B cell (primary cell): ENCODE measurements at regions of chr14 and their contacts with region 1.

Region 1: DNA sequence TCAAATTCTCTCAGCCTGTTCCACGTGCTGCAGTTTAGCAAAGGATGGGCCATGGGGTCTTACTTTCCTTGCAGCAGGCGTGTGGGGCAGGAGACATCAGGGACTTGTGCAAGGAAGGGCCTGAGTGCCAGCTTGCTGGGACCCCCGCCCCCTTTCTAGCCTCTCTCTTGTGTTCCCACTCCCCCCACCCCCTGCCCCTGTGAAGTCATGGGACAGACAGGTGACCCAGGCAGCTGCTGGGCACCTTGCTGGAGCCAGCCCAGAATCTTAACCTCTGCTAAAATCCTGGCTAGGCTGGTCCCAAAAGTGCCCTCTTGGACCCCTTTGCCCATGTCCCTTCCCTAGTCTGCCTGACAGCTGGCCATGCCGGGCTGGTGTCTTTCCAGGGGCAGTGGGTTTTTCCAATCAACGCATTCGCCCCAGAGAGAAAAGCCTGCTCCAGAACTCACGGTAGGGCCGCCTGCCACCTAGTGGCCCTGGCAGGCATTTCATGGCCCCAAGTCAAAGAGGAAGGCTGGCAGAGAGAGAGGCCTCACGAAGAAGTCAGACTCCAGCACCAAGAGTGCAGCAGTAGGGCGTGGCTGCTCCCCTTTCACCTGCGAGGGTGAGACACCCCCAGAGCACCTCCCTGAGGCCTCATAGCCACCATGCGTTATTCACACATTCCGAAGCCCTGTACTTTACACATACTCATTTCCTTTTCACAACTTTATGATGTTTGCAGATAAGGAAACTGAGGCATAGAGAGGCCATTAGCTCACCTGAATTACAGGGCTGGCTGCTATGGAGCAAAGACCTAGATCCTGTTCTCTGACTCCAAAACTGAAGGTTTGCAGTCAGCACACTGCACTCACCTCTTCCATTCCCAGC is 67.4 kb downstream of the LGMN start:
- DNase-seq: peak; percentile 87
- ATAC-seq: peak; percentile 16
- H3K4me3 ChIP-seq: no peak overlapping the region
- H3K4me3 Mint-ChIP-seq: no peak overlapping the region
- H3K27ac ChIP-seq: peak overlapping the region; percentile 52 to 66
- H3K27ac Mint-ChIP-seq: peak overlapping the region; percentile 86
- H3K4me1 ChIP-seq: peaks cover 31% of the 10 kb centered on the region in 2 donors
- H3K4me1 Mint-ChIP-seq: peaks cover 38% of the 10 kb centered on the region
- H3K27me3 ChIP-seq: no peaks in the 10 kb centered on the region
- H3K27me3 Mint-ChIP-seq: no peaks in the 10 kb centered on the region
- CTCF ChIP-seq: peak; percentile 97

Region 2: GRCh38 chr14:92507174-92507768 is 173.7 kb before region 1 on chr14:
- CTCF ChIA-PET with region 1: no interaction called
- POLR2A ChIA-PET with region 1: no interaction called
- intact Hi-C with region 1: loop called (anchors 2 kb)
- DNase-seq: peak; percentile 84
- ATAC-seq: peak; percentile 77
- H3K4me3 ChIP-seq: peak overlapping the region in 4 of 5 experiments; percentile 5 to 53 (median 14)
- H3K4me3 Mint-ChIP-seq: peak overlapping the region; percentile 46
- H3K27ac ChIP-seq: peak overlapping the region; percentile 59 to 70
- H3K27ac Mint-ChIP-seq: peak overlapping the region; percentile 80
- H3K4me1 ChIP-seq: peaks cover 37 to 55% of the 10 kb centered on the region in 2 donors
- H3K4me1 Mint-ChIP-seq: peaks cover 62% of the 10 kb centered on the region
- H3K27me3 ChIP-seq: no peaks in the 10 kb centered on the region
- H3K27me3 Mint-ChIP-seq: no peaks in the 10 kb centered on the region
- CTCF ChIP-seq: no peak

Region 3: DNA sequence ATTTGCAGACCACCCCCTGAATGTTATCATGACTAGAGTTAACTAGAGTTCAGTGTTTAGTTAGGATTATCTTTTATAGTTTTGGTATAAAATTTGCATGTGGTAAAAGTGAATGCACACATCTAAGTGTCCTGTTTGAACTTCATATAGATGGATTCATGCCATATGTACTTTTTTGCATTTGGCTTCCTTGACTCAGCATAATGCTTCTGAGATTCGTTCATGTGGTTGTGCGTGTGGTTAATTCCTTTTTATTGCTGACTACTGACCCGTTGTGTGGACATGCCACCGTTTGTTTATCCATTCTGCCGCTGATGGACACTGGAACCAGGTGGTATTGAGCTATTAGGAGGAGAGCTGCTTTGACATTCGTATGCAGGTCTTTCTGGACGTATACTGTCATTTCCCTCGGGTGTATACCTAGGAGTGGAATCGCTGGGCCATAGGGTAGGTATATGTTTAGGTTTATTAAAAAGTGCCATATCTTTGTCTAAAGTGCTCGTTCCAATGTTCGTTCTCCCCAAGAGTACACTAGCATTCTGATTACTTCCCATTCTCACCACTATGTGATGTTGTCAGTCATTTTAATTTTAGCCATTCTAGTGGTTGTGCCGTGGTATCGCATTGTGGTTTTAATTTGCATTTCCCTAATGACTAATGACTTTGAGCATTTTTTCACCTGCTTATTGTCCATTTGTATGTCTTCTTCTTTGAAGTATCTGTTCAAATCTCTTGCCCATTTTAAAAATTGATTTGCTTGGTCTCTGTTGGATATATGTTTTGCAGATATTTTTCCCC is 129.8 kb before region 1 on chr14:
- CTCF ChIA-PET with region 1: interaction called, 4 read pairs
- POLR2A ChIA-PET with region 1: no interaction called
- intact Hi-C with region 1: loop called (anchors 1 kb)
- DNase-seq: peak; percentile 78
- ATAC-seq: peak; percentile 74
- H3K4me3 ChIP-seq: no peak overlapping the region
- H3K4me3 Mint-ChIP-seq: peak overlapping the region; percentile 38
- H3K27ac ChIP-seq: no peak overlapping the region
- H3K27ac Mint-ChIP-seq: no peak overlapping the region
- H3K4me1 ChIP-seq: peaks cover 36 to 38% of the 10 kb centered on the region in 2 donors
- H3K4me1 Mint-ChIP-seq: peaks cover 38% of the 10 kb centered on the region
- H3K27me3 ChIP-seq: peaks cover 0 to 17% (median 6%) of the 10 kb centered on the region in 4 experiments
- H3K27me3 Mint-ChIP-seq: peaks cover 29% of the 10 kb centered on the region
- CTCF ChIP-seq: peak; percentile 76

Region 4: GRCh38 chr14:92600318-92601053 is 80.5 kb before region 1 on chr14:
- CTCF ChIA-PET with region 1: interaction called, 29 read pairs
- POLR2A ChIA-PET with region 1: no interaction called
- intact Hi-C with region 1: no loop called
- DNase-seq: no peak
- ATAC-seq: no peak
- H3K4me3 ChIP-seq: no peak overlapping the region
- H3K4me3 Mint-ChIP-seq: no peak overlapping the region
- H3K27ac ChIP-seq: no peak overlapping the region
- H3K27ac Mint-ChIP-seq: peak overlapping the region; percentile 2
- H3K4me1 ChIP-seq: peaks cover 0 to 13% of the 10 kb centered on the region in 2 donors
- H3K4me1 Mint-ChIP-seq: peaks cover 38% of the 10 kb centered on the region
- H3K27me3 ChIP-seq: no peaks in the 10 kb centered on the region
- H3K27me3 Mint-ChIP-seq: no peaks in the 10 kb centered on the region
- CTCF ChIP-seq: no peak

Region 5: GRCh38 chr14:92670160-92670559 is 10.9 kb before region 1 on chr14:
- CTCF ChIA-PET with region 1: interaction called, 11 read pairs
- POLR2A ChIA-PET with region 1: interaction called, 9 read pairs
- intact Hi-C with region 1: loop called (anchors 1 kb)
- DNase-seq: peak; percentile 50
- ATAC-seq: no peak
- H3K4me3 ChIP-seq: no peak overlapping the region
- H3K4me3 Mint-ChIP-seq: peak overlapping the region; percentile 33
- H3K27ac ChIP-seq: peak overlapping the region in 1 of 2 donors; percentile 29
- H3K27ac Mint-ChIP-seq: peak overlapping the region; percentile 75
- H3K4me1 ChIP-seq: peaks cover 53 to 74% of the 10 kb centered on the region in 2 donors
- H3K4me1 Mint-ChIP-seq: peaks cover 81% of the 10 kb centered on the region
- H3K27me3 ChIP-seq: no peaks in the 10 kb centered on the region
- H3K27me3 Mint-ChIP-seq: no peaks in the 10 kb centered on the region
- CTCF ChIP-seq: no peak

Region 6: DNA sequence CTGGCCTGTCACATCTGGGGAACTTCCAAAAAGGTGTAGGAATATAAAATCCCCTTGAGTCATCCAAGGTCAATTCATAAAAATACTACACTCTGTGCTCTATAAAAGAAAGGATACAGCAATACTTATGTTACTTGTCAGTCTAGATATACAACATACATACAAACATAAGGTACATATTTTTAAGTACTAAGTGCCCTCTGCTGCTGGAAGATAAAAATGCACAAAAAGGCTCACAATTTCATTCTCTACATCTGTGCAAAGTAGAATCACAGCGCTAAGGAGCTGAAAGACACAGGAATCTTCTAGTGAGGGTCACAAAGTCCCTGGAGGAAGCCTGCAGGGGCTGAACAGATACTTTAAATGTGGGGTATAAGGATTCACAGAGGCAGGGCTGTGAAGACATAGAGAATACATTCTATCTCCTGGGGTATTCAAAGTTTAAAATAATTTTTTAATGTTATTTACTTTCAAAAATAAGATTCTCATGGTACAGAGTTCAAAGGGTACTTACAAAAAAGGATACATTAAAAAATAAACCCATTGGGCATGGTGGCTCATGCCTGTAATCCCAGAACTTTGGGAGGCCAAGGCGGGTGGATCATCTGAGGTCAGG is 102.9 kb after region 1 on chr14:
- CTCF ChIA-PET with region 1: interaction called, 45 read pairs
- POLR2A ChIA-PET with region 1: interaction called, 4 read pairs
- intact Hi-C with region 1: loop called (anchors 2 kb)
- DNase-seq: peak; percentile 80
- ATAC-seq: peak; percentile 77
- H3K4me3 ChIP-seq: no peak overlapping the region
- H3K4me3 Mint-ChIP-seq: no peak overlapping the region
- H3K27ac ChIP-seq: no peak overlapping the region
- H3K27ac Mint-ChIP-seq: no peak overlapping the region
- H3K4me1 ChIP-seq: peaks cover 3 to 6% of the 10 kb centered on the region in 2 donors
- H3K4me1 Mint-ChIP-seq: peaks cover 15% of the 10 kb centered on the region
- H3K27me3 ChIP-seq: no peaks in the 10 kb centered on the region
- H3K27me3 Mint-ChIP-seq: no peaks in the 10 kb centered on the region
- CTCF ChIP-seq: peak; percentile 83

Region 7: DNA sequence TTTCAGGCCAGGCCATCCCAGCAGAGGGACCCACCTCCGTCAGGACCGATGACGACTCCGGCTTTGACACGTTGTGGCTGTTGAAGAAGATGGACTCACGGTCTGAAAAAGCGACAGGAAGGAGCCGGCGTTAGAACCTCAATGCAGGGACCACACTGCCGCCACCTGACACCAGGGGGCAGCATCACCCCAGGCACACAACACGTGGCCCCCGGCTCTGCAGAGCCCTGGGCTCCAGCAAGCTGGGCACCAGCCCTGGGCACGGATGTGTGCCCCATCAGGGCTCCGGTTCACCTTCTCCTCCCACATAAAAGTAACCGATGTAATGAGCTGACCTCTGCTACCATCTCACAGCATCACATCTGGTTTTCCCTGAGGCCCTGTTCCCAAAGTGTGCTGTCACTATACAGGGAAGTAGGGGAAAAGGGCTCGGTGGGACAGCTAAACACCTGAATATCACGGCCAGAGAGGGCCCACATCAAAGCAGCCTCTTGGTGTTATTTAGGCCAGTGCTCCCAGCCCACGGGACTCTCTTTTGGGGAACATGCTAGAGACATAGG is 271.0 kb after region 1 on chr14:
- CTCF ChIA-PET with region 1: no interaction called
- POLR2A ChIA-PET with region 1: no interaction called
- intact Hi-C with region 1: no loop called
- DNase-seq: peak; percentile 82
- ATAC-seq: peak; percentile 96
- H3K4me3 ChIP-seq: no peak overlapping the region
- H3K4me3 Mint-ChIP-seq: no peak overlapping the region
- H3K27ac ChIP-seq: no peak overlapping the region
- H3K27ac Mint-ChIP-seq: no peak overlapping the region
- H3K4me1 ChIP-seq: peaks cover 0 to 5% of the 10 kb centered on the region in 2 donors
- H3K4me1 Mint-ChIP-seq: peaks cover 4% of the 10 kb centered on the region
- H3K27me3 ChIP-seq: no peaks in the 10 kb centered on the region
- H3K27me3 Mint-ChIP-seq: no peaks in the 10 kb centered on the region
- CTCF ChIP-seq: peak; percentile 88